GM10248 (cell line): ENCODE measurements at regions of chr17 and their contacts with region 1.

Region 1: DNA sequence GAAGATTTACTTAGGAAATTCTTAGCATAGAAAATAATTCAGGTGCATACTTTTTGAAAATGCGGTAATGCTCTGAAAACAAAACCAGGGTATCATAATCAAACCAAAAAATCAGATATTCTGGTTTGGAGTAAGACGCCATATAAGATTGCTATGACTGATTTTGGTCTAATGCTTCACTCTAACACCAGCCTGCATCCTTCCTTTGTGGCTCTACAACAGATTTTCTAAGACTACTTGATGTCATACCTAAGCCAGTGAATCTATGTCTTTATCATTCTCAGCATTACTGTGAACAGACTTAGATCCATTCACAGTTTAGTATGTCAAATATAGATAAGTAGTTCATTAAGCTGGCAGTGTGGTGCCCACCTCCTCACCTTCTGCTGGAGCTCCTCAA is 590 bp downstream of the KRT33B start:
- DNase-seq: no peak
- CTCF ChIP-seq: no peak

Region 2: DNA sequence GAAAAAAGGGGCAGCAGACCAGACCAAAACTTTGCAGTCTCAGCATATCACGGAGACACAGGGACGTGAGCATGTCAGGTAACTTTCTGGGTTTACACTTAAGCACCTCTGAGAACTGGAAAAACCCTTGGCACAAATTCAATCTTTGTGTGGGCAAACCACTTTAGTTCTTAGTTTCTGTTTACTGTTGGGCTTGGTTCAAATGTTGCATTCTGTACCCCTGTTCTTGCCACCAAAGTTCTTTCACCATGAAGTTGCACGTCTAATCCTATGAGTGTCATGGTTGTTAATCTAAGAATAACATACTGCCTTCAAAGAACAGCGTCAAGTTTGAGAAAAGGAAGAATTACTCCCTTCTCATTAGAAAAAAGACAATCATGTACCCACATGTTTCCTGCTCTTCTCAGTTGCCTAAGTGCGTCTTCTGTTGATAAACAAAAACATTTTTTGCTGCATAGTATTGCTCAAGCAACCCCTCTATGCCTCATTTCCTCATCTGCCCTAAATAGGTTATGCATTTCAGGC is 30.0 kb before region 1 on chr17:
- CTCF ChIA-PET with region 1: no interaction called
- POLR2A ChIA-PET with region 1: no interaction called
- DNase-seq: no peak
- CTCF ChIP-seq: no peak

Region 3: GRCh38 chr17:41354531-41354930 is 14.5 kb before region 1 on chr17:
- CTCF ChIA-PET with region 1: interaction called, 11 read pairs
- POLR2A ChIA-PET with region 1: no interaction called
- DNase-seq: no peak
- CTCF ChIP-seq: no peak